Calu3 (cell line): ENCODE measurements at regions of chr14 and their contacts with region 1.

Region 1: DNA sequence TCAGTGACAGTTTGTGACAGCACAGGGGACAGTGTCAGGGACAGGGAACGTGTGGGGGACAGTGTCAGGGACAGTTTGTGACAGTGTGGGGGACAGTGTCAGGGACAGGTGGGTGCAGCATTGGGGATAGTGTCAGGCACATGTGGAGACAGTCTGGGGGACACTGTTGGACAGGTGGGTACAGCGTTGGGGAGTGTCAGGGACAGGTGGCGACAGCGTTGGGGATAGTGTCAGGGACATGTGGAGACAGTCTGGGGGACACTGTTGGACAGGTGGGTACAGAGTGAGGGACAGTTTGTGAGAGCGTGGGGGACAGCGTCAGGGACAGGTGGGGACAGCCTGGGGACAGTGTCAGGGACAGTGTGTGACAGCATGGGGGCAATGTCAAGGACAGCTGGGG is 140.0 kb downstream of the TMEM121 start:
- DNase-seq: no peak
- H3K4me3 Mint-ChIP-seq: no peak overlapping the region
- H3K27ac Mint-ChIP-seq: no peak overlapping the region
- H3K4me1 Mint-ChIP-seq: no peaks in the 10 kb centered on the region
- H3K27me3 Mint-ChIP-seq: peaks cover 43% of the 10 kb centered on the region
- CTCF ChIP-seq: no peak

Region 2: GRCh38 chr14:105480952-105481801 is 185.2 kb before region 1 on chr14:
- CTCF ChIA-PET with region 1: no interaction called
- intact Hi-C with region 1: no loop called
- DNase-seq: peak; percentile 95
- H3K4me3 Mint-ChIP-seq: peak overlapping the region; percentile 55
- H3K27ac Mint-ChIP-seq: peak overlapping the region; percentile 91
- H3K4me1 Mint-ChIP-seq: peaks cover 38% of the 10 kb centered on the region
- H3K27me3 Mint-ChIP-seq: no peaks in the 10 kb centered on the region
- CTCF ChIP-seq: peak; percentile 88

Region 3: GRCh38 chr14:105944632-105945610 is 278.5 kb after region 1 on chr14:
- CTCF ChIA-PET with region 1: no interaction called
- intact Hi-C with region 1: loop called (anchors 10 kb)
- DNase-seq: peak; percentile 85
- H3K4me3 Mint-ChIP-seq: no peak overlapping the region
- H3K27ac Mint-ChIP-seq: no peak overlapping the region
- H3K4me1 Mint-ChIP-seq: no peaks in the 10 kb centered on the region
- H3K27me3 Mint-ChIP-seq: peaks cover 96% of the 10 kb centered on the region
- CTCF ChIP-seq: peak; percentile 81

Region 4: GRCh38 chr14:106210652-106211051 is 544.2 kb after region 1 on chr14:
- CTCF ChIA-PET with region 1: no interaction called
- intact Hi-C with region 1: no loop called
- DNase-seq: no peak
- H3K4me3 Mint-ChIP-seq: no peak overlapping the region
- H3K27ac Mint-ChIP-seq: no peak overlapping the region
- H3K4me1 Mint-ChIP-seq: no peaks in the 10 kb centered on the region
- H3K27me3 Mint-ChIP-seq: peaks cover 83% of the 10 kb centered on the region
- CTCF ChIP-seq: no peak